ENCODE measurements at regions of chr5 and their contacts with region 1.

Region 1: GRCh38 chr5:57779383-57780223 is 297.0 kb upstream of the ACTBL2 start:
- DNase-seq: peak; percentile 90
- H3K4me3 ChIP-seq: peak overlapping the region in 1 of 3 experiments; percentile 3
- H3K27ac ChIP-seq: peak overlapping the region; percentile 71
- H3K4me1 ChIP-seq: peaks cover 37% of the 10 kb centered on the region
- H3K27me3 ChIP-seq: no peaks in the 10 kb centered on the region
- CTCF ChIP-seq: peak; percentile 30 to 53
- POLR2A ChIP-seq: no peak

Region 2: DNA sequence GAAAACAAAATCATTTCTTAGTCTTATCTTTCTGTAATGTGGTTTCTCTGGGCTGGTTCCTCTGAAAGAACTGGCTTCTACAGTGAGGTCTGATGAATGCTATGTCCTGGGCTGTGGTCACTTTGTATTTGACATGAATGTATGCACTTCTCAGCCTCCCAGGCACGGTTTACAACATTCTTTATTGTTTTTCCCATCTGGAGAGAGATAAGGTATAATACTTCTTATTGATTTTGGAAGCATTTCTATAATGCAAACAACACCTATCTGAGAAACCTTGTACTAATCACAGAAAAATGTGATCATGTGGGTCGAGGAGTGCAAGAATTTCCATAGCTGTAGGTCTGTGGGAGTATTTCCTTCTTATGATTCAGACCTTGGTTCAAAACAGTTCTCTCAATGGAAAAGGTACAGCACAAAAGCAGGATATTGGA is 343.9 kb before region 1 on chr5:
- CTCF ChIA-PET with region 1: interaction called, 7 read pairs
- POLR2A ChIA-PET with region 1: no interaction called
- dilution Hi-C with region 1: no loop called
- intact Hi-C with region 1: loop called (anchors 1 kb)
- DNase-seq: peak; percentile 99
- H3K4me3 ChIP-seq: no peak overlapping the region
- H3K27ac ChIP-seq: peak overlapping the region; percentile 98
- H3K4me1 ChIP-seq: peaks cover 71% of the 10 kb centered on the region
- H3K27me3 ChIP-seq: no peaks in the 10 kb centered on the region
- CTCF ChIP-seq: no peak
- POLR2A ChIP-seq: peak; percentile 37

Region 3: DNA sequence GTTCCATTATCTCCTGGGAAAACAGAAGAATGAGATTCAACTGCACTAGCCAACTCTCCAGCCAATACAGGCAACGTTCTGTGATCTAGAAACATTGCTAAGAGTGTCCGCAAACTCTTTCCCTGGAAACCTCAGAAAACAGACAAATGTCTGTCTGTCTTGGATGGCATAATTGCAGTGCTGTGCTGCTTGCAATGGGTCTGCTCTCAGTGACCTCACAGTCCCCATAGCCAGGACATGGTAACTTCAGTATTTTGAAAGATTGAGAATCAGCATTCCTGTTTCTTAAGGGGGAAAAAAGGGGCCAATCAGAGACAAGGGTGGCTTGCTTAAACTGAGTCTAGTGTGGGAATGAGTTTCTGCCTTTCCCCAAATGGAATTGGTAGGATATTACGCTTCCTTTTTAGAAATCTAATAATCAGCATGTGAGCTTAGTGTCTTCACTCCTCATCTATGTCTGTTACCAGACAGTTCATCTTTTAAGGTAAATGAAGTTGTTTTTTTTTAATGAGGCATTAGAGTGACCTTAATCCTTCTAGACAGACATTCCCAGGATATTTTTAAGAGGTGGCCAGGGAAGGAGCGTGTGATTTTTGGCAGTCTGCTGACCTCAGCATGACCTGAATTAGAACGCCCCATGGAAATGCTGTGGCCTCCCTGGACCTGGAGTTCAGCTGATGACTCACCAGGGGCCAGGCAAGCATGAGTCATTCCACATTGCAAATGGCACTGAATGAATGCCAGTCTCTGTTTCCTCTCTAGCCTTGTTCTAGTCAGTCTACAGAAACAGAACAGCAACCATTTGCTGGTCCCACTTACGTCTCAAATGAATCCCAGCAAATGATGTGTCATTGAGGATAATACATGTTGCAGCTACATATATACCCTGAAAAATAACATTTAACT is 86.8 kb before region 1 on chr5:
- CTCF ChIA-PET with region 1: interaction called, 14 read pairs
- POLR2A ChIA-PET with region 1: no interaction called
- dilution Hi-C with region 1: no loop called
- intact Hi-C with region 1: loop called (anchors 2 kb)
- DNase-seq: peak; percentile 90
- H3K4me3 ChIP-seq: no peak overlapping the region
- H3K27ac ChIP-seq: peak overlapping the region; percentile 27
- H3K4me1 ChIP-seq: peaks cover 27% of the 10 kb centered on the region
- H3K27me3 ChIP-seq: no peaks in the 10 kb centered on the region
- CTCF ChIP-seq: no peak
- POLR2A ChIP-seq: no peak

Region 4: GRCh38 chr5:57911438-57911837 is 131.8 kb after region 1 on chr5:
- CTCF ChIA-PET with region 1: interaction called, 13 read pairs
- POLR2A ChIA-PET with region 1: no interaction called
- dilution Hi-C with region 1: no loop called
- intact Hi-C with region 1: no loop called
- DNase-seq: peak; percentile 66
- H3K4me3 ChIP-seq: no peak overlapping the region
- H3K27ac ChIP-seq: no peak overlapping the region
- H3K4me1 ChIP-seq: peaks cover 8% of the 10 kb centered on the region
- H3K27me3 ChIP-seq: peaks cover 4 to 8% of the 10 kb centered on the region in 2 experiments
- CTCF ChIP-seq: no peak
- POLR2A ChIP-seq: no peak

Region 5: DNA sequence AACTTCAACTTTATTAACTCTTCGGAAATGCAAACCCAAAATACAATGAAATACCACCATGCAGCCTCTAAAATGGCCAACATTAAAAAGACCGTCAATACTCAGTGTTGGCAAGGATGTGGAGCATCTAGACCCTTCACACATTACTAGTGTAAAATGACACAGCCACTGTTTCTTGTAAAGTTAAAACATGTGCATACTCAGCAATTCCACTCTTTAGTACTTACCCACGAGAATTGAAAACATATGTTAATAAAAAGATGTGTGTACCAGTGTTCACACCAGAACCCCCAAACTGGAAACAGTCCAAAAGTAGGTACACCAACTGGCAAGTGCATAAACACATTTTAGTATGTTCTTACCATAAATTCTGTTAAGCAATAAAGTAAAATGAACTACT is 385.5 kb after region 1 on chr5:
- CTCF ChIA-PET with region 1: no interaction called
- POLR2A ChIA-PET with region 1: no interaction called
- dilution Hi-C with region 1: no loop called
- intact Hi-C with region 1: no loop called
- DNase-seq: no peak
- H3K4me3 ChIP-seq: no peak overlapping the region
- H3K27ac ChIP-seq: no peak overlapping the region
- H3K4me1 ChIP-seq: no peaks in the 10 kb centered on the region
- H3K27me3 ChIP-seq: no peaks in the 10 kb centered on the region
- CTCF ChIP-seq: no peak
- POLR2A ChIP-seq: no peak

Region 6: GRCh38 chr5:58259685-58260152 is 480.1 kb after region 1 on chr5:
- CTCF ChIA-PET with region 1: interaction called, 11 read pairs
- POLR2A ChIA-PET with region 1: interaction called, 3 read pairs
- dilution Hi-C with region 1: no loop called
- intact Hi-C with region 1: no loop called
- DNase-seq: peak; percentile 85
- H3K4me3 ChIP-seq: peak overlapping the region in 1 of 3 experiments; percentile 20
- H3K27ac ChIP-seq: peak overlapping the region; percentile 91
- H3K4me1 ChIP-seq: peaks cover 26% of the 10 kb centered on the region
- H3K27me3 ChIP-seq: no peaks in the 10 kb centered on the region
- CTCF ChIP-seq: no peak
- POLR2A ChIP-seq: peak; percentile 42

Region 7: DNA sequence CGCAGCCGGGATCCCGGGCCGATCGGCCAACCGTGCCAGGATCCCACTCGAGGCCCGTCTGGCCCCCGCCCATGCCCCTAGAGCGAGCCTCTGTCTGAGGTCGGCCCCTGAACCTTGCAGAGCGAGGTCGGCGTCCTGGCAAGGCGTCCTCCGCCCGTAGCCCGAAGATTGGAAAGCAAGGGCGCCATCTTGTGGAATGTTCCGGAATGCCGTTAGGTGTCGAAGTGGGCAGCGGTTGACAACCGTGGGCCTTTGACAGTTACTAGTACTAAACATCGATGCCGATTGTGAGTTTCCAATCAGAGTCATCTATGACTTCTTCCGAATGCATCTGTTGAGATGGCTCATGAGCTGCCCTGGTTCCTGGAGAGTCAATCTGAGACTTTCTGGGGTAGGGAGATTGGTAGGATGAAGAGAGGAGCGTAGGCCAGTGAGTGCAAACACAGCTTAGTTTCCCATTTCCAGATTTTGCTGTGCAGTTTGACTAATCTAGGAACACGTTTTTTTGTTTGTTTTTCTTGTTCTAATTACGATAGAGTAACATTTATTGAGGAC is 681.2 kb after region 1 on chr5:
- CTCF ChIA-PET with region 1: interaction called, 260 read pairs
- POLR2A ChIA-PET with region 1: interaction called, 50 read pairs
- dilution Hi-C with region 1: loop called (anchors 25 kb)
- intact Hi-C with region 1: loop called (anchors 1 kb)
- DNase-seq: peak; percentile 91
- H3K4me3 ChIP-seq: peak overlapping the region; percentile 34 to 94 (median 92)
- H3K27ac ChIP-seq: peak overlapping the region; percentile 87
- H3K4me1 ChIP-seq: peaks cover 25% of the 10 kb centered on the region
- H3K27me3 ChIP-seq: no peaks in the 10 kb centered on the region
- CTCF ChIP-seq: peak; percentile 72 to 82
- POLR2A ChIP-seq: no peak